Activated B cell treated with CpG ODN at 0.5 μM for 24 hours (primary cell): ENCODE measurements at regions of chr9 and their contacts with region 1.

Region 1: DNA sequence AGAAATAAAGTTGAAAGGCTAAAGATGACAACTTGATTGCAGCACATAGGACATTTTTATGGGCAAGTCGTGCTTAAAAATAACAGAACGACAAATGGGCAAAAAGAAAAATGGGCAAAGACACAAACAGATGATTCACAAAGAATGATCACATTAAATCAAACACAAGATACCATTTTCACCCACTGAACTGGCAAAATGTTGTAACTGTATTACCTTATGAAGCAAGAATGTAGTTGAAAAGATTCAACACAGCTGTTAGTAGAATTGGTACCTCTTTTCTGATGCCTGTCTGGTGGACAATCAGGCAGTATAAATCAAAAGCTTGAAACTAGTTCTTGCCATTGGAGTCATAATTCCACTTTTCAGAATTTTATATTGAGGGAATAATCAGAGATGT is 81.0 kb upstream of the PALM2AKAP2 start:
- DNase-seq: no peak
- ATAC-seq: no peak
- H3K4me3 Mint-ChIP-seq: no peak overlapping the region
- H3K27ac Mint-ChIP-seq: no peak overlapping the region
- H3K4me1 Mint-ChIP-seq: no peaks in the 10 kb centered on the region
- H3K27me3 Mint-ChIP-seq: peaks cover 5% of the 10 kb centered on the region
- CTCF ChIP-seq: no peak

Region 2: DNA sequence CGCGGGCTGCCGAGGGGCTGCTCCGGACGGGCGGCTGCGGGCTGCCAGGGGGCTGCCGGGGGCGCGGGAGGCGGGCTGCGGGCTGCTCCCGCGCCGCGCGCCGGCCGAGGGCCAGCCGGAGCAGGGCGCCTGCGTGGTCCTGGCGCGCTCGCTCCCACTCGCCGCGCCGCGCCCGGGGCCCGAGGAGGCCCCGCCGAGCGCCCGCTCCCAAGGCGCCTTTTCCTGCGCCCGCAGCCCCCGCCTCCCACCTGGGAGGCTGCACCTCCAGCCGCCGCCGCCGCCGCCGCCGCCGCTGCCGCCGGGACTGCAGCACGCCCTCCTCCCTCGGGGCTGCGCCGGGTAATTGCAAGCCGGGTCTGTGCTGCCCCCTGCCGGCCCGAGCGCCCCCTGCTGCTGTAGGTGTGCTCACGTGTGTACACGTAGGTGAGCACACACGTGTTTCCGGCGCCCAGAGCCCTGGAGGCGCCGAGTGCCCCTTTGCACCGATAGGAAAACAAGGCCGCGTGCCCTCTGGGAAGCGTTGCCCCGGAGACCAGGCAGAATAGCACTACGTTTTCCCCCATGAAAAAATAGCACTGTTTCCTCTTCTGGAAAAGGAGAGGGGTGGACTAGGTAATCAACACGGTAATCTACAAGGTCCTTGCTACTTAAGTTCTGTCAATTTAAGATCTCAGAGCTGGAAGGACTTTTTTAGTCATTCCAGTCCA is 378.1 kb before region 1 on chr9 and contains the start of gene EPB41L4B:
- CTCF ChIA-PET with region 1: no interaction called
- POLR2A ChIA-PET with region 1: no interaction called
- intact Hi-C with region 1: no loop called
- DNase-seq: peak; percentile 81
- ATAC-seq: peak; percentile 96
- H3K4me3 Mint-ChIP-seq: peak within 1 kb of the TSS; percentile 83
- H3K27ac Mint-ChIP-seq: no peak within 1 kb of the TSS
- H3K4me1 Mint-ChIP-seq: peaks cover 19% of the 10 kb centered on the region
- H3K27me3 Mint-ChIP-seq: peaks cover 57% of the 10 kb centered on the region
- CTCF ChIP-seq: peak; percentile 60
- total RNA-seq, gene EPB41L4B: 5.3 and 6.1 TPM in 2 replicates

Region 3: GRCh38 chr9:110089688-110090370 is 390.8 kb after region 1 on chr9:
- CTCF ChIA-PET with region 1: no interaction called
- POLR2A ChIA-PET with region 1: no interaction called
- intact Hi-C with region 1: loop called (anchors 5 kb)
- DNase-seq: no peak
- ATAC-seq: no peak
- H3K4me3 Mint-ChIP-seq: no peak overlapping the region
- H3K27ac Mint-ChIP-seq: peak overlapping the region; percentile 37
- H3K4me1 Mint-ChIP-seq: peaks cover 91% of the 10 kb centered on the region
- H3K27me3 Mint-ChIP-seq: no peaks in the 10 kb centered on the region
- CTCF ChIP-seq: no peak